ENCODE measurements at regions of chr2 and their contacts with region 1.

Region 1: GRCh38 chr2:58407487-58407886 is 166.4 kb upstream of the FANCL start:
- DNase-seq: no peak
- H3K4me3 ChIP-seq: no peak overlapping the region
- H3K27ac ChIP-seq: no peak overlapping the region
- H3K4me1 ChIP-seq: no peaks in the 10 kb centered on the region
- H3K27me3 ChIP-seq: no peaks in the 10 kb centered on the region
- CTCF ChIP-seq: no peak

Region 2: DNA sequence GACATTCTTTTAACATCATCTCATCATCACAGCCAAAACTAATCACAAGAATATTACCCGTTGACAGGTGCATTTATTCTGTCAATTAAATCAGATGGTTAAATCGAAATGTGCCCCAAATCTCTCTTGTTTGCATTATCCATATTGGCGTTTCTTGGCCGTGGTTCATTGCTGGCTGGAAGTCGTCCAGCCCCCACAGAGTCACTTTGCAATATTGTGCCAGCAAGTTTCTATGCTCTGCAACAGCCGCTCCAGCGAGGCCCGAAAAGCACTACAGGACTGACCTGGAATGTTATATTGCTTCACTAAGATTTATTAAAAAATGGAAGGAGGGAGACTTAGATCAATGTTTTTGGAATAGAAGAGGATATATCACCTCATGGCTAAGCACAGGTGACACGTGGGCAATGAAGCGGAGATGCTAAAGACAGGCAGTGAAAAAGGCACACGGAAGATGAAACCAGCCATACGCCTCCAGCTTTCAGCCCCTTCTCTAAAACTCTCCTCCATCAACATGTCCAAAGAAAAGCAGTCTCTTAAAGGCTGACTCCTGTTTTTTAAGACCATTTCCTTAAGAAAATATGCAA is 537.6 kb before region 1 on chr2:
- CTCF ChIA-PET with region 1: no interaction called
- POLR2A ChIA-PET with region 1: no interaction called
- intact Hi-C with region 1: no loop called
- DNase-seq: peak in 1 of 2 experiments; percentile 9
- H3K4me3 ChIP-seq: no peak overlapping the region
- H3K27ac ChIP-seq: no peak overlapping the region
- H3K4me1 ChIP-seq: no peaks in the 10 kb centered on the region; the same call in 1 of the 2 replicates
- H3K27me3 ChIP-seq: no peaks in the 10 kb centered on the region
- CTCF ChIP-seq: no peak

Region 3: DNA sequence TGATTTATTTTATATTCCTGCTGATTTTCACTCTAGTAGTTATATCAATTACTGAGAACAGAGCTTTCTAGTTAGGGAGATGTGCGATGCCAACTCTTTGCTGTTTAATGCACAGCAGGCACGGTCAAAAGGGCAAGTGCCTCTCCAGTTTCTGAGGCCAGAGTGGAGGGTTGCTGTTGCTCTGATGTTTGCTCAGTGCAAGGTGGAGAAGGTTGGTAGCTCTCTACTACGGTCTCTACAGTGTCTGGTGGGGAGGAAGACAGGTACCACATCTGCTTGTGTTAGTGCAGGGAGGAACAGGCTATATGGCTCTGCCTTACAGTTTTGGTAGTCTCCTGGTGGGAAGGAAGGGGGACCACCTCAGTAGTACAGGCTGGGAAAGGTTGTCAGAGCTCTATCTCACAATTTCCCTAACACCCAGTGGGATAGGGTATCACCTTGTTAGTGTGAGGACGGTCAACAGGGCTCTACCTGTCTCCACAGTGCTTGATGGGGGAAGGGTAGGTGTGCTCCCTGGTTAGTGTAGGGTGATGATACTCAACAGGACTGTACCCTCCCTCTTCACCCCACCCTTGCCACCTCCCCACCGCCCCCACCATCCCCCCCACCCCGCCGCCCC is 252.2 kb before region 1 on chr2:
- CTCF ChIA-PET with region 1: interaction called, 10 read pairs
- POLR2A ChIA-PET with region 1: no interaction called
- intact Hi-C with region 1: no loop called
- DNase-seq: no peak
- H3K4me3 ChIP-seq: no peak overlapping the region
- H3K27ac ChIP-seq: no peak overlapping the region
- H3K4me1 ChIP-seq: no peaks in the 10 kb centered on the region
- H3K27me3 ChIP-seq: no peaks in the 10 kb centered on the region
- CTCF ChIP-seq: no peak

Region 4: GRCh38 chr2:58283931-58284330 is 123.6 kb before region 1 on chr2:
- CTCF ChIA-PET with region 1: no interaction called
- POLR2A ChIA-PET with region 1: no interaction called
- intact Hi-C with region 1: no loop called
- DNase-seq: no peak
- H3K4me3 ChIP-seq: no peak overlapping the region
- H3K27ac ChIP-seq: no peak overlapping the region
- H3K4me1 ChIP-seq: no peaks in the 10 kb centered on the region; the same call in 1 of the 2 replicates
- H3K27me3 ChIP-seq: no peaks in the 10 kb centered on the region
- CTCF ChIP-seq: no peak